ENCODE measurements at regions of chr17 and their contacts with region 1.

Region 1: DNA sequence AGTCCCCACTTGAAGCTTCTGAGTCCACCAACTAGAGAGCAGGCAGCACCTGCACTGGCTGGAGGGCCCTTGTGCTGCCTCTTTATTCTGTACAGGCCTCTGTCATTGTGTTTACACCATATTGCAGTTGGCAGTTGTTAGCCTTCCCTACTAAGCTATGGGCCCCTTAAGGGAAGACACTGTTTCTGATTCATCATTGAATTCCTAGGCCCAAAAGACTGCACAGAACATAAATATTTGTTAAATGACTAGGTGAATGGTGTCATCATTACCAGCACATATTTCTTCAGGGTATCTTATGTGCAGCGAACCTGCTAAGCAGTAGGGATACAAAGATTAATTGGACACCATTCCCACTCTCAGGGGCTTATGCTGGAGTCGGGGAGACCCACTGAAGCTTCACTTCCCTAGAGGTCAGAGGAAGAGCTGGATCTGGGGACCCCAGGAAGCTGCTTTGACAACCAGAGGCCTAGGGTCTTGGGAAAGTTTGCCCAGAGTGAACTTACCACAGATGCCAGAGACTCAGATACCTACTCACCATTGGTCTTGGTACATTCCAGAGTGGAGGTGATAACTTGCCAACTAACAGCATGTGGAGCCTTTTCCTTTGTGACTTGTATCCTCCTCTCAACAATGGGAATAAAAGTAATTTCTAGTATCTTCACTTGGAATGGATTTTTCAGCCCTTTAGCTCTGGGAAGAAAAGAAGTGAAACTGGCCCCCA is 28.7 kb upstream of the DDX52 start:
- DNase-seq: peak; percentile 85
- ATAC-seq: peak; percentile 24; the same call in 2 of the 3 replicates
- H3K4me3 ChIP-seq: no peak overlapping the region
- H3K27ac ChIP-seq: peak overlapping the region; percentile 35
- H3K4me1 ChIP-seq: peaks cover 91% of the 10 kb centered on the region
- H3K27me3 ChIP-seq: no peaks in the 10 kb centered on the region
- CTCF ChIP-seq: no peak
- EP300 ChIP-seq: peak in 1 of 2 experiments; percentile 29; a peak in 2 of 4 replicates
- POLR2A ChIP-seq: no peak
- RAD21 ChIP-seq: no peak

Region 2: DNA sequence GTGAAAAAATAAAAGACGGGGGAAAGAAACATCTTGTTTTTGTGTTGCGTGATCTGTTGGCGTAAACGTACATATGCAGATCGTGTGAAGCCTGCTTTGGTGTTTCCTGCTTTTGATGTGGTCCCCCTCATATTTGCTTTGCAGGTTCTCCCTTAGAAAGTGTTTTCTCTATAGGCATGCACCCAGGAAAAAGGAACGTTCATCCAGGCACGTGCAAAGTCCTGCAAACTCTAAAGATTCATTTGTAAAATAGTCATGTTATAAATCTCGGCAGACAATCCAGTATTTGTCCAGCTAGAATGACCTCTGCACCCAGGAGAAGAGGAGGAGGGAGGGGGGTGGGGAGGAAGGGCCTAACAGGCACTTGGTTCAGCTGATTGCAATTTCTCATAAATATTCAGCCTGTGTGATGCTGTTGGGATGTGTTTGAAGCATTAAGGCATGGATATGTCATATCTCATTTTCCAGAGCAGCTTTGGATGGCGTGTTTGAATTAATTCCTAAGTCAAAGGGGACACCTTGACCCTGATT is 11.5 kb after region 1 on chr17:
- CTCF ChIA-PET with region 1: no interaction called
- POLR2A ChIA-PET with region 1: interaction called, 9 read pairs
- in situ Hi-C with region 1: no loop called
- intact Hi-C with region 1: loop called (anchors 1 kb)
- DNase-seq: peak; percentile 97
- ATAC-seq: peak; percentile 74
- H3K4me3 ChIP-seq: no peak overlapping the region
- H3K27ac ChIP-seq: peak overlapping the region; percentile 76
- H3K4me1 ChIP-seq: peaks cover 65% of the 10 kb centered on the region
- H3K27me3 ChIP-seq: no peaks in the 10 kb centered on the region
- CTCF ChIP-seq: no peak
- EP300 ChIP-seq: peak; percentile 24 to 82; a peak in 3 of 4 replicates
- POLR2A ChIP-seq: no peak
- RAD21 ChIP-seq: 0 out of 2 replicates have a peak, but pooled peaks have one; percentile 18

Region 3: GRCh38 chr17:37689317-37689716 is 17.3 kb after region 1 on chr17:
- CTCF ChIA-PET with region 1: no interaction called
- POLR2A ChIA-PET with region 1: interaction called, 14 read pairs
- in situ Hi-C with region 1: no loop called
- intact Hi-C with region 1: no loop called
- DNase-seq: peak; percentile 86
- ATAC-seq: peak; percentile 52
- H3K4me3 ChIP-seq: no peak overlapping the region; a peak in 1 of 6 replicates
- H3K27ac ChIP-seq: peak overlapping the region; percentile 33
- H3K4me1 ChIP-seq: peaks cover 77% of the 10 kb centered on the region
- H3K27me3 ChIP-seq: no peaks in the 10 kb centered on the region
- CTCF ChIP-seq: no peak
- EP300 ChIP-seq: peak in 1 of 2 experiments; percentile 87; a peak in 1 of 4 replicates
- POLR2A ChIP-seq: no peak
- RAD21 ChIP-seq: no peak

Region 4: DNA sequence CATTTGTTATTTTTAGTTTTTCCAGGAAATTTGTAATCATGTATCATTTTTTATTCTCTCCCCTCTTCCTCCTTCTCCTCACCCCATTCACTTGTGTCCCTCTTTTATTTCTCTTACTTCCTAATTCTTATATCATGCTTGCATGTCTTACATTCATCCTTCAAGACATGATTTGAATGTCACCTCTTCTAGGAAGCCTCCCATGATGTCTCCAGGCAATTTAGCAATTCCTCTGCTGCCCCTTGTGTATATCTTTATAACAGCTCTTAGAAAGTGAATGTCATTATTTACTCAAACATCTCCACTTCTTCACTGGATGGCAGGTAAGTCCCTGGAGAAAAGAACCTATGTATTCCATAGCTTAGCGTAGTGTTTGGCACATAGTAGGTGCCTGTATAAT is 65.1 kb after region 1 on chr17:
- CTCF ChIA-PET with region 1: no interaction called
- POLR2A ChIA-PET with region 1: no interaction called
- in situ Hi-C with region 1: no loop called
- intact Hi-C with region 1: no loop called
- DNase-seq: peak; percentile 36
- ATAC-seq: no peak
- H3K4me3 ChIP-seq: no peak overlapping the region
- H3K27ac ChIP-seq: no peak overlapping the region
- H3K4me1 ChIP-seq: peaks cover 51% of the 10 kb centered on the region
- H3K27me3 ChIP-seq: no peaks in the 10 kb centered on the region
- CTCF ChIP-seq: peak; percentile 16; the same call in 1 of the 2 replicates
- EP300 ChIP-seq: no peak
- POLR2A ChIP-seq: no peak
- RAD21 ChIP-seq: peak; percentile 43; the same call in 1 of the 2 replicates